T-cell (primary cell): ENCODE measurements at regions of chr1 and their contacts with region 1.

Region 1: GRCh38 chr1:237562242-237562823 is 328.4 kb downstream of the ZP4 start:
- DNase-seq: peak in 2 of 35 experiments; percentile 1 to 62
- ATAC-seq: no peak
- H3K4me3 ChIP-seq: no peak overlapping the region
- H3K4me3 Mint-ChIP-seq: no peak overlapping the region
- H3K27ac ChIP-seq: no peak overlapping the region
- H3K27ac Mint-ChIP-seq: no peak overlapping the region
- H3K4me1 ChIP-seq: no peaks in the 10 kb centered on the region
- H3K4me1 Mint-ChIP-seq: no peaks in the 10 kb centered on the region
- H3K27me3 ChIP-seq: no peaks in the 10 kb centered on the region
- H3K27me3 Mint-ChIP-seq: peaks cover 9 to 10% of the 10 kb centered on the region in 2 donors

Region 2: GRCh38 chr1:236103646-236104218 is 1458.6 kb before region 1 on chr1:
- CTCF ChIA-PET with region 1: interaction called, 3 to 10 read pairs
- POLR2A ChIA-PET with region 1: no interaction called
- DNase-seq: peak; percentile 8 to 80 (median 42)
- ATAC-seq: peak; percentile 48 to 66 (median 56)
- H3K4me3 ChIP-seq: no peak overlapping the region
- H3K4me3 Mint-ChIP-seq: no peak overlapping the region
- H3K27ac ChIP-seq: no peak overlapping the region
- H3K27ac Mint-ChIP-seq: no peak overlapping the region
- H3K4me1 ChIP-seq: peaks cover 0 to 3% of the 10 kb centered on the region in 2 experiments
- H3K4me1 Mint-ChIP-seq: peaks cover 0 to 4% (median 2%) of the 10 kb centered on the region in 3 donors
- H3K27me3 ChIP-seq: peaks cover 0 to 8% of the 10 kb centered on the region in 2 experiments
- H3K27me3 Mint-ChIP-seq: no peaks in the 10 kb centered on the region

Region 3: DNA sequence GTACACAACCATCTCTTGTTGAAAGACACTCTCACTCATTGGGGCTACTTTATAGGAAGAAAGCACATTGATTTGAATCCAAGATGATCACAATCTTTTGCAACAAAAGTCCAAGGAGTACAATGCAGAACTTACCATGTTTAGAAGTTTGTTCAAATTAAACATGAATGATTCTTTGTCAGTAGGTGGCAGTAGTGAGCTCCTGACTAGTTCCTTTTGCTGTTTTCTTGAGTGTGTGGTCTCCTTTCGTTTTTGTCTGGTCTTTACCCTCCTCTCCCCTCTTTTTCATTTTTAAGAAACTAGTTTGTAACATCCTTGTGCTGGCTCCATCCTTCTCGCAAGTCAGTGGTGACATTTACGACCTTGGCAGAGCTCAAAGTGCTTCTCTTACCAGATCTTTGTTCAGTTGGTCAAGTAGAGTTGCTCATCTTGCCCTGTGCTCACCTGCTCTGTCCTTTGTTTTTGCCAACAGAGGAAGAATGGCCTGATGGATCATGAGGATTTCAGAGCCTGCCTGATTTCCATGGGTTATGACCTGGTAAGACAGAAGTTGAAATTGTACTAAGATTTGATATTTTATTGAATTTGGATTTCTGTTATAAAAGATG is 803.0 kb before region 1 on chr1:
- CTCF ChIA-PET with region 1: interaction called, 3 to 18 read pairs
- POLR2A ChIA-PET with region 1: no interaction called
- DNase-seq: peak in 5 of 35 experiments; percentile 1 to 73 (median 9)
- ATAC-seq: no peak
- H3K4me3 ChIP-seq: no peak overlapping the region
- H3K4me3 Mint-ChIP-seq: no peak overlapping the region
- H3K27ac ChIP-seq: no peak overlapping the region
- H3K27ac Mint-ChIP-seq: no peak overlapping the region
- H3K4me1 ChIP-seq: no peaks in the 10 kb centered on the region
- H3K4me1 Mint-ChIP-seq: peaks cover 1 to 5% (median 3%) of the 10 kb centered on the region in 3 donors
- H3K27me3 ChIP-seq: peaks cover 0 to 2% of the 10 kb centered on the region in 2 experiments
- H3K27me3 Mint-ChIP-seq: peaks cover 6 to 14% of the 10 kb centered on the region in 2 donors

Region 4: GRCh38 chr1:237542525-237543418 is 19.6 kb before region 1 on chr1:
- CTCF ChIA-PET with region 1: interaction called in 1 of 2 experiments, 12 read pairs
- POLR2A ChIA-PET with region 1: no interaction called
- DNase-seq: no peak
- ATAC-seq: no peak
- H3K4me3 ChIP-seq: no peak overlapping the region
- H3K4me3 Mint-ChIP-seq: no peak overlapping the region
- H3K27ac ChIP-seq: no peak overlapping the region
- H3K27ac Mint-ChIP-seq: no peak overlapping the region
- H3K4me1 ChIP-seq: no peaks in the 10 kb centered on the region
- H3K4me1 Mint-ChIP-seq: no peaks in the 10 kb centered on the region
- H3K27me3 ChIP-seq: no peaks in the 10 kb centered on the region
- H3K27me3 Mint-ChIP-seq: no peaks in the 10 kb centered on the region